A673 (cell line): ENCODE measurements at regions of chr5 and their contacts with region 1.

Region 1: GRCh38 chr5:163505368-163506094 is at the start of gene MAT2B:
- DNase-seq: peak; percentile 95
- H3K4me3 ChIP-seq: peak within 1 kb of the TSS; percentile 84
- H3K27ac ChIP-seq: peak within 1 kb of the TSS; percentile 93
- H3K4me1 ChIP-seq: peaks cover 8% of the 10 kb centered on the region
- H3K27me3 ChIP-seq: no peaks in the 10 kb centered on the region
- CTCF ChIP-seq: peak; percentile 57
- total RNA-seq, gene MAT2B: 49.9 and 50.3 TPM in 2 replicates

Region 2: GRCh38 chr5:163459922-163460766 is 45.4 kb before region 1 on chr5 and contains the starts of genes HMMR and NUDCD2:
- CTCF ChIA-PET with region 1: no interaction called
- POLR2A ChIA-PET with region 1: no interaction called
- intact Hi-C with region 1: loop called (anchors 2 kb)
- DNase-seq: peak; percentile 98
- H3K4me3 ChIP-seq: peak within 1 kb of the TSS; percentile 84
- H3K27ac ChIP-seq: peak within 1 kb of the TSS; percentile 100
- H3K4me1 ChIP-seq: peaks cover 31% of the 10 kb centered on the region
- H3K27me3 ChIP-seq: no peaks in the 10 kb centered on the region
- CTCF ChIP-seq: no peak
- total RNA-seq, gene HMMR: 57.6 and 64.8 TPM in 2 replicates
- total RNA-seq, gene NUDCD2: 53.2 and 67.2 TPM in 2 replicates